AG04449 (cell line): ENCODE measurements at regions of chr5 and their contacts with region 1.

Region 1: GRCh38 chr5:132386644-132387286 is 17.3 kb downstream of the SLC22A5 start:
- DNase-seq: no peak
- H3K4me3 ChIP-seq: no peak overlapping the region
- CTCF ChIP-seq: peak; percentile 94

Region 2: GRCh38 chr5:132369474-132370180 is 17.1 kb before region 1 on chr5 and contains the start of gene SLC22A5:
- CTCF ChIA-PET with region 1: interaction called, 10 read pairs
- POLR2A ChIA-PET with region 1: no interaction called
- DNase-seq: no peak
- H3K4me3 ChIP-seq: peak within 1 kb of the TSS; percentile 64
- CTCF ChIP-seq: no peak

Region 3: GRCh38 chr5:132466433-132467286 is 79.9 kb after region 1 on chr5:
- CTCF ChIA-PET with region 1: interaction called, 16 read pairs
- POLR2A ChIA-PET with region 1: no interaction called
- DNase-seq: no peak
- H3K4me3 ChIP-seq: no peak overlapping the region
- CTCF ChIP-seq: no peak

Region 4: DNA sequence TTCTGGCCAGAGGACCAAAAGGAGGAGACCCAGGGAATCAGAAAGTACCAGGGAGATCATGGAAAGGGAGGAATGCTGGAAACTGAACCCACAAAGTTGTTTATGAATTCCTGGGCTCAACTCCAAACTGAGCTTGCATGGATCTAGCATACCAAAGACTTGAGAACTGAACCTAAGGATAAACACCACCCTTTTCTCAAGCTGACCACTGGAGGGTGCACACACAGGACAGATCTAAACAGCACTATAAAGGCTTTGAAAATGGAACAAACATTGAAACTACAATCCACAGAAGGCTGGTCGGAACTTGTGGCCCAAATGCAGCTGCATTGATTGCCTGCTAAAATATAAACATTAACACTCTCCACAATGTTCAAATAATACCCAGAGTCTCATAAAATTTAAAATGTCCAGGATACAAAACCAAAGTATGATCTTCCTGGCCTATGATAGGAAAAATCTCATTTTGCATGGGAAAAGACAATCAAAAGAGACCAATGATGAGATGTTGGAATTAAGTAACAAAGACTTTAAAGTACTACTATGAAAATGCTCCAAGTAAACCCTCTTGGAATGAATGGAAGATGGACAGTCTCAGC is 119.4 kb after region 1 on chr5:
- CTCF ChIA-PET with region 1: interaction called, 610 read pairs
- POLR2A ChIA-PET with region 1: interaction called, 3 read pairs
- DNase-seq: peak; percentile 93
- H3K4me3 ChIP-seq: 0 out of 2 replicates have a peak overlapping the region, but pooled peaks have one; percentile 8
- CTCF ChIP-seq: peak; percentile 79

Region 5: DNA sequence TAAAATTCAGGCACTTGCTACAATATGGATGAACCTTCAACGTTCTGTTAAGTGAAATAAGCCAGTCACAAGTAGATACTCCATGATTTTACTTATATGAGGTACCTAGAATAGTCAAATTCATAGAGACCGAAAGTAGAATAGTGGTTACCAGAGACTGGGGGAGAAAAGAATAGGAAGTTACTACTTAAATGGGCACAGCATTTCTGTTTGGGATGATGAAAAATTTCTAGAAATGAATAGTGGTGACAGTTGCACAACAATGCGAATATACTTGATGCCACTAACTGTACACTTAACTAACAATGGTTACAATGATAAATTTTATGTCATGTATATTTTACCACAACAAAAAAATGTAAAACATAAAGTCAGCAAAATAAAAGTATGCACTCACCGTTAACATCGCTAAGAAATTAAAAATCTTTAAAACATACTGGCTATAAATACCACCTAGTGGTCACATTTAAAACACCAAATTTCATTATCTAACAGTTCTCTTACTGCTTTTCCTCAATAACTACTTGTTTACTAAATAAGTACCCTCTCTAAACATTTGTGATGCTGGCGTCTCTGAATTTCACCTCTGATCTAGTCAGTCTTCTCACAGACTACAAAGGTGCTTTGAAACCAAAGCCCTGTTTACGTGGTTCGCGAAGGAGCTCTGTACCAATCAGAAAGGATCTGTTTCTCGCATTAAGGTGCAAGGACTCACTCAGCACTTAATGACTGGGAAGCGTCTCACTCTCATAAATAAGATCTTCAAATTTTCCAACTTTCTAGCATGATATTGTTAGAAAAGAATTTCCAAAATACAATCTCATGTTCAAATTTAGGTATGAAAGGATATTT is 327.9 kb after region 1 on chr5:
- CTCF ChIA-PET with region 1: interaction called, 10 read pairs
- POLR2A ChIA-PET with region 1: no interaction called
- DNase-seq: no peak
- H3K4me3 ChIP-seq: no peak overlapping the region
- CTCF ChIP-seq: no peak

Region 6: GRCh38 chr5:132883261-132883834 is 496.6 kb after region 1 on chr5:
- CTCF ChIA-PET with region 1: interaction called, 18 read pairs
- POLR2A ChIA-PET with region 1: no interaction called
- DNase-seq: no peak
- H3K4me3 ChIP-seq: no peak overlapping the region
- CTCF ChIP-seq: peak; percentile 71